CD8-positive, alpha-beta T cell (primary cell): ENCODE measurements at regions of chr10 and their contacts with region 1.

Region 1: DNA sequence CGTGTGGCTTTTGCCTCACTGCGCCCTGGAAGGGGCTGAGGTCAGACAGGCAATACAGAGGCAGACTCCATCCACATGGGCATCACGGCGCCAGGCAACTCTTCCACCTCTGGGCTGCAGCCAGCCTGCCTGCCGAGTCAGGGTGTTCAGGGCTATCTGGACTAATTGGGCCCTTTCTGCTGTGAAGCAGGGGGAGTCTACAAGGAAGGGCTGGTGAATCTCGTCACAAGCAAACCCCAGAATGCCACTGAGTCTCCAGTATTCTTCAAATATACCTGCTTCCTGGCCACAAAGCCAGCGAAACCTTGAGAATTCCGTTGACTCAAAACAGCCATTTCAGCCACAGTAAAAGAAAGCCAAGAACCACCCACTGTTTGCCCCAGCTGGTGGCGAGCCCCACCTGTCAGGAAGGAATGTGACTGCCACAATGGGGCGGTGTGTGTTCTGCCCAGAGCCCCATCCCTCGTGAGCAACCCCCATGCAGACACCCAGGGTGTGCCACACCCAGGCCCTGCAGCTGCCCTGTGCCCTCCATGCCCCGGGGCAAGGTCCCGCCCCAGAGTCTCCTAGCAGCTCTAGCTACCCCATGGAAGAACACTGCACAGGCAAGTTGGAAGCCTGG is 117.3 kb downstream of the FAM53B start:
- DNase-seq: peak in 7 of 9 experiments; percentile 49 to 78 (median 62)
- ATAC-seq: peak; percentile 80
- H3K4me3 ChIP-seq: no peak overlapping the region
- H3K4me3 Mint-ChIP-seq: peak overlapping the region; percentile 45
- H3K27ac ChIP-seq: peak overlapping the region in 1 of 2 experiments; percentile 48
- H3K27ac Mint-ChIP-seq: peak overlapping the region; percentile 81
- H3K4me1 ChIP-seq: peaks cover 40% of the 10 kb centered on the region
- H3K4me1 Mint-ChIP-seq: peaks cover 52% of the 10 kb centered on the region
- H3K27me3 ChIP-seq: no peaks in the 10 kb centered on the region
- H3K27me3 Mint-ChIP-seq: no peaks in the 10 kb centered on the region
- CTCF ChIP-seq: no peak

Region 2: GRCh38 chr10:124641282-124642087 is 14.6 kb after region 1 on chr10:
- CTCF ChIA-PET with region 1: interaction called, 15 read pairs
- POLR2A ChIA-PET with region 1: interaction called, 6 read pairs
- intact Hi-C with region 1: no loop called
- DNase-seq: peak in 7 of 9 experiments; percentile 41 to 85 (median 64)
- ATAC-seq: peak; percentile 71
- H3K4me3 ChIP-seq: peak overlapping the region in 1 of 2 experiments; percentile 13
- H3K4me3 Mint-ChIP-seq: peak overlapping the region; percentile 59
- H3K27ac ChIP-seq: peak overlapping the region; percentile 47 to 68
- H3K27ac Mint-ChIP-seq: peak overlapping the region; percentile 94
- H3K4me1 ChIP-seq: peaks cover 66% of the 10 kb centered on the region
- H3K4me1 Mint-ChIP-seq: peaks cover 71% of the 10 kb centered on the region
- H3K27me3 ChIP-seq: no peaks in the 10 kb centered on the region
- H3K27me3 Mint-ChIP-seq: no peaks in the 10 kb centered on the region
- CTCF ChIP-seq: no peak